Lower leg skin (tissue), 4 donors: ENCODE measurements at regions of chr17 and their contacts with region 1.

Region 1: DNA sequence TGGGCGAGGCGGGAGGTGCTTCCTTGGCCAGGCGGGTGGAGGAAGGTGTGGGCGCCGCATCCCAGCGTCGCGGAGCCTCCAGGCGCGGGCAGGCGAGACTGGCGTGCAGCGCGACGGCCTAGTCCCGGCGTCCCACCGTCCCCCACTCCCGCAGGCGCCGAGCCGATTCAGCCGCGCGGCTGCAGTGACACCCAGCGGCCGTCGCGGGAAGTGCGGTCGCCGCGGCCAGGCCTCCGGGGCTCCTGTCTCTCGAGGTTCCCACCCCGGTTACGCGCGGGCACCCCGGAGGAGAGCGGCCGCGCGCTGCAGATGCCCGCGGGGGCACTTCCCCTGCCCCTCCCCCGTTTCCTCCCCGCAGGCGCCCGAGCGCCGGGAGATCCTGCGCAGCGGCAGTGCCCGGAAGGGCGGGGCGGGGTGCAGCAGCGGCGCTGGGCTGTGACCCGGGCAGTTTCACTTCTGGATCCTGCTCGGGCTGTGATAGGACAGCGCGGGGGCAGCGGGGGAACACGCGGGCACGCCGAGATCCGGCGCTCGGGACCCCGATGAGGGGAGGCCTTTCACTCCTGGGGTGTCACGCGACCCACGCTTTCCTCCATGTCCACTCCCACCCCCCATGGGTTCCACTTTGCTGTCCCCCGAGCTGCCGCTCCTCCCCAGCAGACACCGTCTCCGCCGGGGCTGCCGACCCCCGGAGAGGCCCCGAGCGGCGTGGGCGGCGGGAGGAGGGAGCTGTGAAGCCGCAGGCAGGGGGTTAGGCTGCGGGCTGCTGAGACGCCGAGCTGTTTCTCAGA is 16.6 kb downstream of the GRB7 start:
- DNase-seq: peak; percentile 84 to 98
- H3K4me3 ChIP-seq: peak overlapping the region; percentile 44
- CTCF ChIP-seq: peak in 1 of 3 donors; percentile 91
- POLR2A ChIP-seq: peak in 1 of 2 donors; percentile 16

Region 2: DNA sequence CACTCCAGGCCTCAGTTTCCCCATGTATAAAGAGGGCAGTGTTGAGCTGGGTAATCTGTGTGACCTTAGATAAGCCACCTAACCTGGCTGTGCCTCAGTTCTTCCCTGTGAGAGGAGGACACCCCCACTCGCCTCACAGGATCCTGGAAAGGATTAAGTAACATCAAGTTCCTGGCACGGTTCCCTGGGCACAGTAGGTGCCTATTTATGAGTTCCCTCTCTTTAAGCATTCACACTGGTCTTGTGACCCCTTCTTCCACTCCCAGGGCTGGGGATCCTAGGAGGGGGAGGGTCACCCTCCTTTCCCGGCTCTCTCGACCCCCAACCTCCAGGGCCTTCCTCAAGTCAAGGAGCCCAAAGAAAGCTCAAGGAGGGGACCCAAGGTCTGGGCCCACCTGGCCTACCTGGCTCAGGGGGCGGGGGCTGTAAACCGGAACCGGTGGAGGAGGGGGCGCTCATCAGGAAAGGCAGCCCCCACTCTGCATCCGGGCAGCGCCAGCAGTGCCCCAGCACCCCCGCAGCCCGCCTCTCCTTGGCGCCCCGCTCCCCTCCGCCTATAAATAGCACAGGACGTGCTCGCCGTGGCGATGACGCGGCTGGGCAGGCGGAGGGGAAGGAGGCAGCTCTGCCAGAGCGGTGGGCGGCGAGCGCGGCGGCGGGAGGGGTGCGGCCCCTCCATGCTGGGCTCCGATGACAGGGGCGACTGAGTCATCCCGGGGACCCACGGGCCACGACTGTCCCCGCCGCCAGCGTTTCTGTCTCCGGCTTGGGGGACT is 544.9 kb before region 1 on chr17:
- intact Hi-C with region 1: loop called (anchors 5 kb)
- DNase-seq: peak; percentile 81 to 91
- H3K4me3 ChIP-seq: no peak overlapping the region
- CTCF ChIP-seq: no peak
- POLR2A ChIP-seq: no peak

Region 3: DNA sequence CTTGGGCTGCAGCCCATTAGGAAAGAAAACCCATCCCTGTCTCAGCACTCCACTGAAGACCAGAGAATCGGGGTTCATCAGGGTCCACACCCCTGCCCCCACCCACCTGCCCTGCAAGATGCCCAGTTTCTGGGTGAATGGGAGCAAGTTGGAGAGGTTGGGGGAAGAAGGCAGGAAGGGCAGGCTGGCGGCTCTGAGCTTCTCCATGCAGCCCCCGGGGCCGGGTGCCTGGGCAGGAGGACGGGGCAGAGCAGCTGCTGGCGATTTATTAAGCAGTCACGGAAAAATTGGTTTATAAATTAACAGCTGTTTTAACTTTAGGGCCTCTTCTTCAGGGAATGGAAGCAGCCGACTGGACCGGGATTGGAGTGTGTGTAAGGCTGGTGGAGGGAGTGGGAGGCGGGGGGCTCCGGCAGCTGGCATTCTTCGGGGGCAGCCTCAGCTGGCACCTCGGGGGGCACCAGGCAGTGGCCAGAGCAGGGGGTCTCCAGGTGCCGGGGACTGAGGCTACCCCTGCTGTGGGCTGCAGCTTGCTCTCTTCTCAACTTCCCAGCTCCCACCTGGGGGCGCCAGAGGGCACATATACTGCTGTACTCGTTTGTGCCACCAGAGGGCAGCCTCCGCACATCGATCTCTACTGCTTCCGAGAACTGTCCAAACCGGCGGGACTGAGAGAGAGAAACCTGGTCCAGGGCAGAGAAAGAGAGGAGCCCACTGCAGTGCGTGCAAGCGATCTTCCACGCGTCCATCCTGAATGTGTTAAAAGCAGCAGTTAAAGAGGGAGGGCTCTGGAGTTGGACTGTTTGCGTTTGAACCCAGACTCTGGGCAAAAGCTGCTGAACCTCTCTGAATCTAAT is 132.6 kb before region 1 on chr17:
- intact Hi-C with region 1: loop called (anchors 5 kb)
- DNase-seq: peak; percentile 87 to 99
- H3K4me3 ChIP-seq: no peak overlapping the region
- CTCF ChIP-seq: peak in 1 of 3 donors; percentile 97
- POLR2A ChIP-seq: no peak

Region 4: GRCh38 chr17:39699818-39700147 is 54.6 kb before region 1 on chr17 and contains the start of gene ERBB2:
- intact Hi-C with region 1: no loop called
- DNase-seq: peak; percentile 74 to 94
- H3K4me3 ChIP-seq: peak within 1 kb of the TSS; percentile 68
- CTCF ChIP-seq: no peak
- POLR2A ChIP-seq: no peak
- total RNA-seq, gene ERBB2: 181 to 244 (median 191) TPM

Region 5: DNA sequence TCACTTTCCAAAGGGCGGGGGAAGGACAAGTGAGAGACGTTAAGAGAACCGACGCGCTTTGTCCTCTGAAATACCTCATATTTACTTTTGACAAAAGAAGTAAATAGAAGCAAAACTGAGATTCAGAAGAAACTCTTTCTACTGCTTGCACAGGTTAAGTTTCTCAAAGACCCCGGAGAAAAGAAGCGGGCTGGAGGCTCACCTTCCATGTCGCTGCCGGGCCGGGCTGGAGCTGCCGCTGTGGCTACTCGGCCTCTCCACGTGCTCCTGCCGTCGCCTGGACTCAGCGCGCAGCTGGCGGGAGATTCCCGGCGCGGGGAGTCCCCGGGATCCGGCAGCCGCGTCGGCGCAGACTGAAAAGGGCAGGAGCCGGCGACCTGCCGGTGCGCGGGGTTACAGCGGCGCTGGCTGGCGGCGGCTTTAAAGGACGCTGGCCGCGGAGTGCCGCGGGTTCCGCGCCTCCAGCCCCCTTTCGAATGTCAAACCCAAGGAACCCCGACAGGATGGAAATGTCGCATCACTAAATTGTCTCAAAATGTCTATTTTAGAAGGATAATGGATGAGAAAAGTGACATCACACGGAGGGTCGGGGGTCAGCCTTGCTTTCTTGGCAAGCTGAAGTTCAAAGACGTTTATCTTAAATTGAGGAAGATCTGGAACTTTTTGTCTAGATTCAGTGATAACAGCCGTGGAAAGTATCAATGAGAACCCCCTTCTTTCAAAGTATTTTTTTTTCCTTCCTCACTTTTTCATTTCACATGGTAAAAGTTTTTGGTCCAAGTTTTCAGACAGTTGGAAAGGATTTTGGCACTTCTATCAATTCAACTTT is 109.8 kb after region 1 on chr17 and contains the start of gene IKZF3:
- intact Hi-C with region 1: loop called (anchors 10 kb)
- DNase-seq: peak; percentile 15 to 88
- H3K4me3 ChIP-seq: no peak within 1 kb of the TSS
- CTCF ChIP-seq: no peak
- POLR2A ChIP-seq: no peak
- total RNA-seq, gene IKZF3: 0.89 to 1.8 (median 0.97) TPM